A549 (cell line): ENCODE measurements at regions of chr4 and their contacts with region 1.

Region 1: DNA sequence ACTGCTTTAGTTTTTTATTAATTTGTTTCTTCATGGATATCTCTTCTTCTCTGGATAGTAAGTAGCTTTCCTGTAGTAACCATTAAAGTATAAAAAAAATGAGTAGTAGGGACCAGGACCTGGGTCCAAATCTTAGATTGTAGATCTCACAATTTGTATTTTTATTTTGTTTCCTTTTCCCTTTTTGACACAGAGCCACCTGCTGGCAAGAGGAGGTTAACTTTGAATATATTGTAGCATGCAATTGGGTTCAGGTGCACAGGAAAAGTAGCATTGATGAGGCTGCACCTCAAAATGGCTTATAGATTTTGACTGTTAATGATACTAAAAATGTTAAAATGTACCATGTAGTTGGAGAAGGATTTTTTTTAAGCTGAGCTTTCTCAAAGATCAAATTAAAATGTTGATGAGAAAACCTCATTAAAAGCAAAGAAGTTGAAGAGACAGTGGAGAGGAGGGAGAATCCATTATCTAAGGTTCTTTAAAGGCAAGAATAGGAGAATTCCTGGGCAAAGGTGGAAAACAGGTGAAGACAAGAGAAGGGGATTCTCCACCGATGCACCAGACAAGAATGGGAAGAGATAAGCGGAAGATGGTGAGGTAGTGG is 48.3 kb upstream of the HPGDS start:
- DNase-seq: peak in 1 of 2 experiments; percentile 10
- ATAC-seq: peak in 1 of 2 experiments; percentile 30; a peak in 1 of 6 replicates
- H3K4me3 ChIP-seq: no peak overlapping the region
- H3K27ac ChIP-seq: no peak overlapping the region
- H3K4me1 ChIP-seq: no peaks in the 10 kb centered on the region; the same call in 2 of the 3 replicates
- CTCF ChIP-seq: peak; percentile 38
- EP300 ChIP-seq: no peak
- POLR2A ChIP-seq: no peak
- RAD21 ChIP-seq: peak; percentile 34 to 43; a peak in 4 of 5 replicates

Region 2: DNA sequence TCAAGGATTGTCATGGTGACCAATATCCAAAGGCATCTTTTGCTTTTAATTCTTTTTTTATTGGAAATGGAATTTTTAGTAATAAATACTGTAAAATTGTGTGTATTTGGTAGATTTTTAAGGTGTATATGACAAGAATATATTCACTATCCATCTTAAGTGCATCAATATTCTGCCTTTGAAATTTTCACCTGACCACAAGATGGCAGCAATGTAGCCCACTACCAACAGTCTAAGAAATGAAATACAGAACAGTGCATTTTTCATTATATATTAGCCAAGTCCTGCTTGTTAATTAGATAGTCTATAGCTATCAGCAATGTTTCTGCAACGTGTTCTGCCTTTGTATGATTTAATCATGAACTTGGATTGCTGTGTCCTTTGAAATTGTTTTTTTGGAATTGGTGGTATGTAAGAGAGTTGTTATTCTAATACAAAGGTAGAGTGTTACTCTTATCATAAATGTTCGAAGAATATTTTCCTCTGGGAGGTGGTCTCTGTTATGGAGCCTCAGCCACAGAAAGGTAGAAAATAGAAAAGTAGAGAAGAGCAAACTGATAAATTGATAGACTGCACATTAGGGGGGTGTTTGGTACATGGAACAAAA is 86.4 kb before region 1 on chr4:
- CTCF ChIA-PET with region 1: interaction called, 18 read pairs
- POLR2A ChIA-PET with region 1: no interaction called
- DNase-seq: peak; percentile 18 to 38
- ATAC-seq: peak; percentile 59 to 75; a peak in 3 of 6 replicates
- H3K4me3 ChIP-seq: no peak overlapping the region
- H3K27ac ChIP-seq: no peak overlapping the region
- H3K4me1 ChIP-seq: peaks cover 9% of the 10 kb centered on the region; the same call in 1 of the 3 replicates
- CTCF ChIP-seq: peak; percentile 82
- EP300 ChIP-seq: no peak
- POLR2A ChIP-seq: no peak
- RAD21 ChIP-seq: peak; percentile 75 to 78